Activated CD4-positive, alpha-beta memory T cell treated with anti-CD3 and anti-CD28 coated beads for 36 hours (primary cell): ENCODE measurements at regions of chr6 and their contacts with region 1.

Region 1: GRCh38 chr6:151765444-151765886 is 42.0 kb upstream of the ESR1 start:
- DNase-seq: peak; percentile 30
- H3K4me3 Mint-ChIP-seq: no peak overlapping the region
- H3K27ac Mint-ChIP-seq: no peak overlapping the region
- H3K4me1 Mint-ChIP-seq: peaks cover 12% of the 10 kb centered on the region
- H3K27me3 Mint-ChIP-seq: peaks cover 1% of the 10 kb centered on the region

Region 2: DNA sequence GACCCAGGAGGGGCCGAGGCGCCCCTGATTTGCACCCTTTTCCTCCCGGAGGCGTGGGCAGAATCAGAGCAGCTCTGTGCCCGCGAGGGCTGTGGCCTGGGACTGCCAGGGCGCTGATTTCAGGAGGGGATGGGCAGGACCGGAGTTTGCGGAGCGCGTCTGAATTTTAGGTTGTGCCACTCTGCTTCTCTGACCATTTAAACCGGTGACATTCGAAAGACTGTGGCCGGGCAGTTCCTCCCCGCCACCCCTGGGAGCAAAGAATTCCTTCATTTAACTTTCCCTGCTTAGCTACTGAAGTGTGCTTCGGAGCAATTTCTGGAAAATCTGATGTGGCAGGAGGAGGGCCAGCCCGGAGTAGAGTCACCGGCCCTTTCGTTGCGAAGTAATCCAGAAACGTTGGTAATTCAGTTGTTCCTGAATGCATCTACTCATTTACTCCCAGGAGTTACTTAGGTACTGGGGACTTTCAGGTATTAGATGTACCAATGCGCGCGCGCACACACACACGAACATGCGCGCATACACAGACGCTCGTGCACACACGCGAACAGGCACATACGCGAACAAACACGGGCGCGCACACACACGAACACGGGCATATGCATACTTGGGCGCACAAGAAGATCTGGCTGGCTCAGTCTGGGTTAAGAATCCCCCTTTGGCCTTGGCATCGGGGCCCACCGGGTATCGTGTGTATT is 271.1 kb before region 1 on chr6:
- CTCF ChIA-PET with region 1: no interaction called
- POLR2A ChIA-PET with region 1: no interaction called
- intact Hi-C with region 1: no loop called
- DNase-seq: peak; percentile 50
- H3K4me3 Mint-ChIP-seq: peak overlapping the region; percentile 71
- H3K27ac Mint-ChIP-seq: no peak overlapping the region
- H3K4me1 Mint-ChIP-seq: peaks cover 17% of the 10 kb centered on the region
- H3K27me3 Mint-ChIP-seq: peaks cover 34% of the 10 kb centered on the region

Region 3: GRCh38 chr6:151675746-151676416 is 89.6 kb before region 1 on chr6:
- CTCF ChIA-PET with region 1: interaction called, 15 read pairs
- POLR2A ChIA-PET with region 1: no interaction called
- intact Hi-C with region 1: loop called (anchors 2 kb)
- DNase-seq: peak; percentile 65
- H3K4me3 Mint-ChIP-seq: no peak overlapping the region
- H3K27ac Mint-ChIP-seq: no peak overlapping the region
- H3K4me1 Mint-ChIP-seq: peaks cover 10% of the 10 kb centered on the region
- H3K27me3 Mint-ChIP-seq: peaks cover 4% of the 10 kb centered on the region

Region 4: DNA sequence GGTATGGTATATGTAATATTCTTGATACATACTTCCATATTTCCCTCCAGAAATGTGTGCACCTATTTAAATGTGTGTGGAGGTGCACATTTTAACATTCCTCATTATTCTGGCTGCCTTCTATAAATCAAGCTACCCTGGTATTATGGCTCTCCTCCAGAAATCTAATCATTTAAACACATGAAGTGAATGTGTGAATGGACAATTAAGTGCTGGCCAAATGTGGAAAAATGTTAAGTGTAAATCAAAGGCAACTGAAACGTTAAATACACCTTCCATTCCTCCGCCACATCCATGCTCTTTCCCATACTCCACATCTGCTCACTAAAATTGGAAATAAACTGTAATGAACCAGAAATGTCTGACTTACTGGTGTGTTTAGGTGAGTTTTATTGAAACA is 17.1 kb after region 1 on chr6:
- CTCF ChIA-PET with region 1: no interaction called
- POLR2A ChIA-PET with region 1: no interaction called
- intact Hi-C with region 1: no loop called
- DNase-seq: no peak
- H3K4me3 Mint-ChIP-seq: no peak overlapping the region
- H3K27ac Mint-ChIP-seq: no peak overlapping the region
- H3K4me1 Mint-ChIP-seq: no peaks in the 10 kb centered on the region
- H3K27me3 Mint-ChIP-seq: no peaks in the 10 kb centered on the region

Region 5: GRCh38 chr6:152124429-152125074 is 359.1 kb after region 1 on chr6:
- CTCF ChIA-PET with region 1: interaction called, 36 read pairs
- POLR2A ChIA-PET with region 1: no interaction called
- intact Hi-C with region 1: loop called (anchors 1 kb)
- DNase-seq: no peak
- H3K4me3 Mint-ChIP-seq: no peak overlapping the region
- H3K27ac Mint-ChIP-seq: no peak overlapping the region
- H3K4me1 Mint-ChIP-seq: no peaks in the 10 kb centered on the region
- H3K27me3 Mint-ChIP-seq: no peaks in the 10 kb centered on the region

Region 6: GRCh38 chr6:152267967-152268845 is 502.7 kb after region 1 on chr6:
- CTCF ChIA-PET with region 1: interaction called, 10 read pairs
- POLR2A ChIA-PET with region 1: no interaction called
- intact Hi-C with region 1: loop called (anchors 1 kb)
- DNase-seq: no peak
- H3K4me3 Mint-ChIP-seq: no peak overlapping the region
- H3K27ac Mint-ChIP-seq: no peak overlapping the region
- H3K4me1 Mint-ChIP-seq: peaks cover 16% of the 10 kb centered on the region
- H3K27me3 Mint-ChIP-seq: no peaks in the 10 kb centered on the region

Region 7: GRCh38 chr6:152356451-152357061 is 591.1 kb after region 1 on chr6:
- CTCF ChIA-PET with region 1: no interaction called
- POLR2A ChIA-PET with region 1: no interaction called
- intact Hi-C with region 1: loop called (anchors 10 kb)
- DNase-seq: no peak
- H3K4me3 Mint-ChIP-seq: no peak overlapping the region
- H3K27ac Mint-ChIP-seq: no peak overlapping the region
- H3K4me1 Mint-ChIP-seq: no peaks in the 10 kb centered on the region
- H3K27me3 Mint-ChIP-seq: no peaks in the 10 kb centered on the region

Region 8: DNA sequence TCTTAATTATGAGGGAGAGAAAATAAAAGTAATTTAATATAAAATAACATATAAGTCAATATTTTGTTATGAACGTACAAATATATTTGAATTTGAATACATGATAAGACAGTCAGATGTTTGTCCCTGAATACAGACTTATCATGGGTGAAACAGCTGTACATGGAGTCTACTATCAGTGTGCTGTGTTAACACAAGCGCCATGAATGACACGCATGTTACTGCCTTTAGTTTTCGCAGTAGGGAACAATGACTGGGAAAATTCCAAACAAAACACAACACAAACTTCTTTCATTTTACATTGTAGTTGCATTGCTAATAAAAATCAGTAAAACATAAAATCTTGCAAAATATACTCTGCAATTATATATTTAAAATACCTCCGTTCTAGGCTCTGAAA is 1108.8 kb after region 1 on chr6:
- CTCF ChIA-PET with region 1: no interaction called
- POLR2A ChIA-PET with region 1: no interaction called
- intact Hi-C with region 1: no loop called
- DNase-seq: no peak
- H3K4me3 Mint-ChIP-seq: no peak overlapping the region
- H3K27ac Mint-ChIP-seq: no peak overlapping the region
- H3K4me1 Mint-ChIP-seq: no peaks in the 10 kb centered on the region
- H3K27me3 Mint-ChIP-seq: peaks cover 11% of the 10 kb centered on the region